ENCODE measurements at regions of chr1 and their contacts with region 1.

Region 1: DNA sequence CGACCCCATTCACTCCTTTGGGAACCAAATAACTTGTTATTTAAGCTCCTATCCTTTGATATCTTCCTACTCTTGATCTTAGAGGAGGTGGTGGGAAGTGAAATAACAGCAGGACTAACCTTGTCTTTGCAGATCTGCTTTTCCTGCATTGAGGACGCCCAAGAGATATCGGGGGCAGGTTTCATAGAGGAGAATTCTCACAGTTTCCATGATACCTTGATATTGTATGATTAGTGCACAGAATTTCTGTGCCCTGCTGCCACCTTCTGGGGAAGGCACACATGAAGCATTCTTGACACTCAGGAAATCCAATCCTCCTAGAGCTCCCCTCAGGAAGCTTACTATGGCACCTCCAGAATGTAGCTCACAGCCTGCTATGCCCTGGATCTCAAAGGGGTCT is 1.6 kb downstream of the CD1B start:
- DNase-seq: peak; percentile 63
- ATAC-seq: no peak
- H3K4me3 ChIP-seq: no peak overlapping the region
- H3K4me3 Mint-ChIP-seq: no peak overlapping the region
- H3K27ac ChIP-seq: no peak overlapping the region
- H3K27ac Mint-ChIP-seq: no peak overlapping the region
- H3K4me1 ChIP-seq: peaks cover 43 to 55% of the 10 kb centered on the region in 2 donors
- H3K4me1 Mint-ChIP-seq: peaks cover 25% of the 10 kb centered on the region
- H3K27me3 ChIP-seq: no peaks in the 10 kb centered on the region
- H3K27me3 Mint-ChIP-seq: no peaks in the 10 kb centered on the region
- CTCF ChIP-seq: peak; percentile 42

Region 2: GRCh38 chr1:156970017-156970416 is 1359.7 kb before region 1 on chr1:
- CTCF ChIA-PET with region 1: no interaction called
- POLR2A ChIA-PET with region 1: no interaction called
- intact Hi-C with region 1: no loop called
- DNase-seq: no peak
- ATAC-seq: no peak
- H3K4me3 ChIP-seq: no peak overlapping the region
- H3K4me3 Mint-ChIP-seq: no peak overlapping the region
- H3K27ac ChIP-seq: no peak overlapping the region
- H3K27ac Mint-ChIP-seq: no peak overlapping the region
- H3K4me1 ChIP-seq: no peaks in the 10 kb centered on the region
- H3K4me1 Mint-ChIP-seq: no peaks in the 10 kb centered on the region
- H3K27me3 ChIP-seq: peaks cover 0 to 16% (median 4%) of the 10 kb centered on the region in 4 experiments
- H3K27me3 Mint-ChIP-seq: peaks cover 24% of the 10 kb centered on the region
- CTCF ChIP-seq: peak; percentile 17

Region 3: DNA sequence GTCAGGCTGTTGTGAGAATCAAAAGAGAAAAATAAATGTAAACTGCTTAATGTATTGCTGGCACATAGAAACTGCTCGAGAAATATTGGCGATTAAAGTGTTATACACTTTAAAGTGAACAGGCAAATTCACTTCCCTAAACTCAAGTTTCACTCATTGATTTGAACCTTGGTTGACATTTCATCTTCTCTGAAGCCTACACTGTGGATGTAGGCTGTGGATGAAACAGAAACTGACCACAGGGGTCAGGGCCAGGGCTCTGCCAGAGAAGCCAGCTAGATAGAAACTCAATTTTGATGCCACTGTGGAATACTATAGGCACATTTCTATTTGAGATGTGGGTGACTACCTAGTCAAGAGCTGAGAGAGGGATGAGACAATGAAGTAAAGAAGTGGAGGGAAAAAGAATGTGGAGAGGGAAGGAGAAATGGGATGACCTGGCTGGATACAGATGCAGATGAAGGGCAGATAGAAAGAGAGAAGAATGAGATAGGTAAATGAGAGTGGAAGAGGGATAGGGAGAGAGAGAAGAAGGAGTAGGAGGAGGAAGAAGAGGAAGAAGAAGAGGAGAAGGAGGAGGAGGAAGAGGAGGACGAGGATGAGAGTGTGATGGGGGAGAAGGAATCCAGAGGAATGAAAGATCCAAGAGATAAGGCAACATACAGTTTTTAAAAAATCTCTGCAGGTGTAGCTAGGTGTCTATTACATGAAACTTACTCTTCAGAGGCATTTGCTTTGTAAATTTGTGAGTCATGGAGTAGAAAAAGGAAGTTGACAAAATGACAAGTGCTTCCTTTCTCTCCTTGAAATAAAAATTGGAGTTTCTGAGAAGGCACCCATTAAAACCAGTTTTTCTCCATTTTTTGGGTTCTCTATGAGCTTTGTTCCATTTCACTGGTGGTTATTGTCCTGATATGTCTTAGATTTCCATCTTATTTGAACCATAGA is 166.5 kb before region 1 on chr1:
- CTCF ChIA-PET with region 1: interaction called, 14 read pairs
- POLR2A ChIA-PET with region 1: no interaction called
- intact Hi-C with region 1: no loop called
- DNase-seq: peak; percentile 42
- ATAC-seq: peak; percentile 92
- H3K4me3 ChIP-seq: peak overlapping the region in 2 of 5 experiments; percentile 3 to 32
- H3K4me3 Mint-ChIP-seq: peak overlapping the region; percentile 78
- H3K27ac ChIP-seq: peak overlapping the region in 1 of 2 donors; percentile 21
- H3K27ac Mint-ChIP-seq: peak overlapping the region; percentile 68
- H3K4me1 ChIP-seq: peaks cover 33 to 40% of the 10 kb centered on the region in 2 donors
- H3K4me1 Mint-ChIP-seq: peaks cover 35% of the 10 kb centered on the region
- H3K27me3 ChIP-seq: no peaks in the 10 kb centered on the region
- H3K27me3 Mint-ChIP-seq: no peaks in the 10 kb centered on the region
- CTCF ChIP-seq: peak; percentile 23

Region 4: GRCh38 chr1:158248118-158248517 is 81.6 kb before region 1 on chr1:
- CTCF ChIA-PET with region 1: interaction called, 92 read pairs
- POLR2A ChIA-PET with region 1: no interaction called
- intact Hi-C with region 1: loop called (anchors 1 kb)
- DNase-seq: peak; percentile 88
- ATAC-seq: peak; percentile 84
- H3K4me3 ChIP-seq: peak overlapping the region in 3 of 5 experiments; percentile 16 to 32 (median 26)
- H3K4me3 Mint-ChIP-seq: peak overlapping the region; percentile 49
- H3K27ac ChIP-seq: peak overlapping the region; percentile 40 to 63
- H3K27ac Mint-ChIP-seq: peak overlapping the region; percentile 57
- H3K4me1 ChIP-seq: peaks cover 49 to 51% of the 10 kb centered on the region in 2 donors
- H3K4me1 Mint-ChIP-seq: peaks cover 48% of the 10 kb centered on the region
- H3K27me3 ChIP-seq: no peaks in the 10 kb centered on the region
- H3K27me3 Mint-ChIP-seq: no peaks in the 10 kb centered on the region
- CTCF ChIP-seq: no peak

Region 5: GRCh38 chr1:158257888-158258287 is 71.8 kb before region 1 on chr1:
- CTCF ChIA-PET with region 1: interaction called, 20 read pairs
- POLR2A ChIA-PET with region 1: no interaction called
- intact Hi-C with region 1: no loop called
- DNase-seq: peak; percentile 17
- ATAC-seq: no peak
- H3K4me3 ChIP-seq: no peak overlapping the region
- H3K4me3 Mint-ChIP-seq: no peak overlapping the region
- H3K27ac ChIP-seq: peak overlapping the region in 1 of 2 donors; percentile 2
- H3K27ac Mint-ChIP-seq: no peak overlapping the region
- H3K4me1 ChIP-seq: peaks cover 17 to 22% of the 10 kb centered on the region in 2 donors
- H3K4me1 Mint-ChIP-seq: peaks cover 17% of the 10 kb centered on the region
- H3K27me3 ChIP-seq: no peaks in the 10 kb centered on the region
- H3K27me3 Mint-ChIP-seq: no peaks in the 10 kb centered on the region
- CTCF ChIP-seq: no peak

Region 6: GRCh38 chr1:158285756-158286241 is 43.9 kb before region 1 on chr1:
- CTCF ChIA-PET with region 1: interaction called, 23 read pairs
- POLR2A ChIA-PET with region 1: interaction called, 3 read pairs
- intact Hi-C with region 1: loop called (anchors 1 kb)
- DNase-seq: peak; percentile 91
- ATAC-seq: peak; percentile 77
- H3K4me3 ChIP-seq: peak overlapping the region; percentile 3 to 59 (median 30)
- H3K4me3 Mint-ChIP-seq: peak overlapping the region; percentile 86
- H3K27ac ChIP-seq: peak overlapping the region; percentile 75 to 79
- H3K27ac Mint-ChIP-seq: peak overlapping the region; percentile 94
- H3K4me1 ChIP-seq: peaks cover 80 to 93% of the 10 kb centered on the region in 2 donors
- H3K4me1 Mint-ChIP-seq: peaks cover 72% of the 10 kb centered on the region
- H3K27me3 ChIP-seq: no peaks in the 10 kb centered on the region
- H3K27me3 Mint-ChIP-seq: no peaks in the 10 kb centered on the region
- CTCF ChIP-seq: no peak

Region 7: DNA sequence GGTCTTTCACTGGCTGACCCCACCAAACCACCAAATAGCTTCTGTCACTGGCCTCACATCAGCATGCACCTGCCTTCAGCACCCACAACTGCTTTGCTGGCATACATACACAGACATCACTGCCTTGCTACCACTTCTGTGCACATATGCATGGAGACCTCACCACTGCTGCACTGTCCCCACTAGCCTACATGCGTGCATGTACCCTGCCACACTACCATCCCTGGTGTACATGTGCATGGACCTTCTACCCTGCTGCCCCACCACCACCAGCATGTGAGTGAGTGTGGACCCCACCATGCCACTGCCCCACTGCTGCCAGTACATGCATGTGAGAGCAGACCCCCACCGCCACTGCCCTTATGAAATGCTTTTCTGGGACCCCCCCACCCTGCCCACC is 33.9 kb before region 1 on chr1:
- CTCF ChIA-PET with region 1: interaction called, 13 read pairs
- POLR2A ChIA-PET with region 1: no interaction called
- intact Hi-C with region 1: no loop called
- DNase-seq: no peak
- ATAC-seq: no peak
- H3K4me3 ChIP-seq: no peak overlapping the region
- H3K4me3 Mint-ChIP-seq: no peak overlapping the region
- H3K27ac ChIP-seq: no peak overlapping the region
- H3K27ac Mint-ChIP-seq: no peak overlapping the region
- H3K4me1 ChIP-seq: peaks cover 34 to 37% of the 10 kb centered on the region in 2 donors
- H3K4me1 Mint-ChIP-seq: peaks cover 8% of the 10 kb centered on the region
- H3K27me3 ChIP-seq: no peaks in the 10 kb centered on the region
- H3K27me3 Mint-ChIP-seq: no peaks in the 10 kb centered on the region
- CTCF ChIP-seq: no peak

Region 8: GRCh38 chr1:158754420-158754819 is 424.7 kb after region 1 on chr1 and contains the start of gene OR6K6:
- CTCF ChIA-PET with region 1: no interaction called
- POLR2A ChIA-PET with region 1: no interaction called
- intact Hi-C with region 1: no loop called
- DNase-seq: no peak
- ATAC-seq: no peak
- H3K4me3 ChIP-seq: no peak within 1 kb of the TSS
- H3K4me3 Mint-ChIP-seq: no peak within 1 kb of the TSS
- H3K27ac ChIP-seq: no peak within 1 kb of the TSS
- H3K27ac Mint-ChIP-seq: no peak within 1 kb of the TSS
- H3K4me1 ChIP-seq: no peaks in the 10 kb centered on the region
- H3K4me1 Mint-ChIP-seq: no peaks in the 10 kb centered on the region
- H3K27me3 ChIP-seq: peaks cover 0 to 5% (median 0%) of the 10 kb centered on the region in 4 experiments
- H3K27me3 Mint-ChIP-seq: peaks cover 8% of the 10 kb centered on the region
- CTCF ChIP-seq: no peak
- total RNA-seq, gene OR6K6: not detected in 2 replicates